Activated CD8-positive, alpha-beta memory T cell treated with anti-CD3 and anti-CD28 coated beads, Interleukin-2, amount 10 ng/mL, durations not matched to agents 7 days and 5 days (primary cell): ENCODE measurements at regions of chr22 and their contacts with region 1.

Region 1: DNA sequence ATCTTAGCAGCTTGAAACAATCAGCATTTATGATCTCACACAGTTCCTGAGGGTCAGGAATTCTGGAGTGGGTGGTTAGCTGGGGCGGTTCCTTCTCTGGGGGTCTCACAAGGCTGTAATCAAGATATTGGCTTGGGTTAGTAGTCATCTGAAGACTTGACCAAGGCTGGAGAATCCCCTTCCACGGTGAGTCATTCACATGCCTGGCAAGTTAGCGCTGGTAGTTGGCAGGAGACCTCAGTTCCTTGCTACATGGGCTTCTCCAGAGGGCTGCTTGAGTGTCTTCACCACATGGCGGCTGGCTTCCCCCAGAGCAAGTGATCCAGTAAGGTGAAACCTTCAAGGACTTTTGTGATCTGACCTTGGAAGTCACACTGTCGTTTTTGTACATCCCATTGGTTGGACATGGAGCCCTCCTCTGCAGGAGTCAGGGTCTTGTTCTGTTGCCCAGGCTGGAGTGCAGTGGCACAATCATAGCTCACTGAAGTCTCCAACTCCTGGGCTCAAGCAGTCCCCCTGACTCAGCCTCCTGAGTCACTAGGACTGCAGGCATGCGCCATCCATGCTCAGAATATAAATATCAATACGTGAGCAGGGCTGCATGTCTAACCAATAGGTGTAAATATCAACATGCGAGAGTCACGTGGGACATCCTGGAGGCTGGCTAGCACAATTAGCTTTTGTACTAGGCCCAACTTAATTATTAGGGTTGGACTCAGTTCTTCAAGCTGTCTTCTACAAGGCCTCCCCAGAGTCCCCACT is 7.2 kb upstream of the NIPSNAP1 start:
- DNase-seq: no peak
- ATAC-seq: no peak
- H3K4me3 Mint-ChIP-seq: no peak overlapping the region
- H3K27ac Mint-ChIP-seq: no peak overlapping the region
- H3K4me1 Mint-ChIP-seq: peaks cover 9% of the 10 kb centered on the region
- H3K27me3 Mint-ChIP-seq: no peaks in the 10 kb centered on the region

Region 2: DNA sequence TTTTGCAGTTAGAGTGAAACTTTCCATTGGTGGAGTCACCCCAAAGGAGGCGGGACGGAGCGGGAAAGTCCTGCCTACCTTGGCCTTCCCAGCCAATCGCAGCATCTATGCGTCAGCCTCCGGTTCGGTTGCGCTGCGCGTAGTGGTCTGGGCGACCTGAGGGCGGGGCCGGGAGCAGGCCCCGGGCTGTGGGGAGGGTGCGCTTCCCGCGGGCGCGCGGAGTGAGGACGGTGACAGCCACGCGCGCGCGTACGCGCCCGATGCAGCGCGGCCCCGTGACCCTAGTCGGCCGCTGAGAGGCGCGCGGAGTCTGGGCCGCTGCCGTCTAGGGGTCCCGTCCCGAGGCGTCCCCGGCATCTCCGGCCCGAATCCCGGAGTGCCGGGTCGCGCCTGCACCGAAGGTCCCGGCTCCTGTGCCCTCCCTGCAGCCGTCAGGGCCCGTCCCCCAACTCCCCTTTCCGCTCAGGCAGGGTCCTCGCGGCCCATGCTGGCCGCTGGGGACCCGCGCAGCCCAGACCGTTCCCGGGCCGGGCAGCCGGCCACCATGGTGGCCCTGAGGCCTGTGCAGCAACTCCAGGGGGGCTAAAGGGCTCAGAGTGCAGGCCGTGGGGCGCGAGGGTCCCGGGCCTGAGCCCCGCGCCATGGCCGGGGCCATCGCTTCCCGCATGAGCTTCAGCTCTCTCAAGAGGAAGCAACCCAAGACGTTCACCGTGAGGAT is 15.4 kb after region 1 on chr22 and contains the start of gene NF2:
- CTCF ChIA-PET with region 1: interaction called, 36 read pairs
- DNase-seq: peak; percentile 99
- ATAC-seq: peak; percentile 98
- H3K4me3 Mint-ChIP-seq: peak within 1 kb of the TSS; percentile 85
- H3K27ac Mint-ChIP-seq: peak within 1 kb of the TSS; percentile 97
- H3K4me1 Mint-ChIP-seq: peaks cover 28% of the 10 kb centered on the region
- H3K27me3 Mint-ChIP-seq: no peaks in the 10 kb centered on the region
- total RNA-seq, gene NF2: 46.6 to 61.2 TPM

Region 3: GRCh38 chr22:29635734-29636357 is 47.7 kb after region 1 on chr22:
- CTCF ChIA-PET with region 1: no interaction called
- DNase-seq: no peak
- ATAC-seq: peak; percentile 45
- H3K4me3 Mint-ChIP-seq: no peak overlapping the region
- H3K27ac Mint-ChIP-seq: no peak overlapping the region
- H3K4me1 Mint-ChIP-seq: peaks cover 26% of the 10 kb centered on the region
- H3K27me3 Mint-ChIP-seq: no peaks in the 10 kb centered on the region